ENCODE measurements at regions of chr4 and their contacts with region 1.

Region 1: GRCh38 chr4:151604238-151604637 is 156.6 kb downstream of the GATB start:
- DNase-seq: no peak
- H3K4me3 ChIP-seq: no peak overlapping the region
- H3K27ac ChIP-seq: no peak overlapping the region
- H3K4me1 ChIP-seq: peaks cover 0 to 5% (median 0%) of the 10 kb centered on the region in 6 donors
- H3K27me3 ChIP-seq: no peaks in the 10 kb centered on the region
- CTCF ChIP-seq: peak in 7 of 11 experiments; percentile 20 to 54 (median 38)
- POLR2A ChIP-seq: no peak

Region 2: DNA sequence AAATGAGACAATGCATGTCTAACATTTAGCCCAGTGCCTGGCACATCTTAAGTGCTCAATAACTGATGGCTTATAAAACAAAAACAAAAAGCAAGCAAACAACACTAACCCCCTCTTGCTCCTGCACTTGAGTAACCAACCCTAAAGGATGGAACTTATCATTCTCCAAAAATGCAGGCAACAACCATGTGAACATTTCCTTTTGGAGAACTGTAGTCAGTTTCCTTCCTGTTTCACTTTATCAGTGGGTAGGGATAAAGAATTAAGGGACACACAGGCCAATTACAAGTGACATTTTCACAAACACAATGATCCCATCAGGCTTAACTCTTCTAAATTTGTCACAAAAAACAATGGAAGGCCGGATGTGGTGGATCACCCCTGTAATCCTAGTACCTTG is 474.4 kb before region 1 on chr4:
- intact Hi-C with region 1: loop called (anchors 10 kb)
- DNase-seq: no peak
- H3K4me3 ChIP-seq: no peak overlapping the region
- H3K27ac ChIP-seq: peak overlapping the region in 3 of 8 donors; percentile 20 to 48 (median 32)
- H3K4me1 ChIP-seq: peaks cover 0 to 9% (median 0%) of the 10 kb centered on the region in 6 donors
- H3K27me3 ChIP-seq: no peaks in the 10 kb centered on the region
- CTCF ChIP-seq: no peak
- POLR2A ChIP-seq: no peak

Region 3: GRCh38 chr4:151475035-151475714 is 129.1 kb before region 1 on chr4:
- intact Hi-C with region 1: no loop called
- DNase-seq: no peak
- H3K4me3 ChIP-seq: no peak overlapping the region
- H3K27ac ChIP-seq: no peak overlapping the region
- H3K4me1 ChIP-seq: no peaks in the 10 kb centered on the region
- H3K27me3 ChIP-seq: peaks cover 0 to 3% (median 0%) of the 10 kb centered on the region in 7 donors
- CTCF ChIP-seq: no peak
- POLR2A ChIP-seq: no peak

Region 4: DNA sequence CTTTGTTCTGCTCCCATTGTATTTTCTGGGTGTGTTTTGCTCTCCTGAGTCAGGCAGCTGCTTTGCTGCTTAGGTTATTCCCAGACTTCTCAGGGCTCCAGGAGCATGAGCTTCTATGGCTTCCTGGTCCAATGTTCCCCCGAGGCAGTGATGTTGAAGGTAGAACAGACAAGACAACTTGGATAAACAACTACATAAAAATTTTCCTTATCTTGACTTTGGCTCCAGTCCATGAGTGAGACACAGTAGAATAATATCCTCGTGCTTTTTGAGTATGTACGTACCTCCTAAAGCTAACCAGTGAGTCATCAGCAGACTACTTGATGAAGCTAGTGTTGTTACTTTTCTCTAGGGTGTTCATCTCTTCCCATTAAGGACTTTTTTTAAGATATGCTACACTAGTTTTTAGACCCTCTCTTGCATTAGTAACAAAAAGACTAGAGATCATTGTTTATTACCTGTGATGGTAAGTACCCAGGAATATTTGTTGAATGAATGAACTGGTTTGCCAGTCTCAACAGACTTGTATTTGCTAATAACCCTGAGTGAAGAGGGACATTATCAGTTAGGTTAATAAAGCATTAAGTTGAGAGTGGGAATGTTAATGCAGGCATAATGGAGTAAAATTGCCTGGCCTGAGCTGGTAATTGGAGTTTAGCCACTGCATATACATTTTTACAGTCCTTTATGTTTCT is 63.4 kb before region 1 on chr4:
- intact Hi-C with region 1: no loop called
- DNase-seq: no peak
- H3K4me3 ChIP-seq: no peak overlapping the region
- H3K27ac ChIP-seq: peak overlapping the region in 1 of 8 donors; percentile 8
- H3K4me1 ChIP-seq: peaks cover 0 to 10% (median 0%) of the 10 kb centered on the region in 6 donors
- H3K27me3 ChIP-seq: no peaks in the 10 kb centered on the region
- CTCF ChIP-seq: no peak
- POLR2A ChIP-seq: no peak